ENCODE measurements at regions of chr15 and their contacts with region 1.

Region 1: DNA sequence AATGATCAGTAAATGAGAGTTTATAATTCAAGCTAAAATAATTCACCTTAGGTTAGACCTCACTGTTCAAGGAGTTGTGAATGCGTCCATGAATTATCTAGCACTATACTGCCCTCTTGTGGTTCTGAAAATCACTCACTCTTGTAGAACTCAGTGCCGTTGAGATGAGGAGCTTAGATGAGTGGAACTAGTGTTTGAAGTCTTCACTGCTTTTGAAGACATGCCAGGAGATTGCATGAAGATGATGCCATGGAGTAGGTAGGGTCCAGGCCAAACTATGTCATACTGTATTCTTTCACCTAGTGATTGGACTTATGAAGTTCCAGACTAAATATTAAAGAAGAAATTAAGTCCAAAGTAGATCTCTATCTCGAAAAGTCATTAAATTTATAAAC is 28.8 kb downstream of the LYSMD4 start:
- DNase-seq: peak; percentile 61 to 72 (median 70)
- H3K4me3 ChIP-seq: no peak overlapping the region
- H3K4me3 Mint-ChIP-seq: no peak overlapping the region
- H3K27ac ChIP-seq: no peak overlapping the region
- H3K27ac Mint-ChIP-seq: peak overlapping the region in 2 of 7 donors; percentile 8 to 71
- H3K4me1 ChIP-seq: peaks cover 18% of the 10 kb centered on the region
- H3K4me1 Mint-ChIP-seq: peaks cover 23 to 37% (median 31%) of the 10 kb centered on the region in 4 donors
- H3K27me3 ChIP-seq: no peaks in the 10 kb centered on the region
- H3K27me3 Mint-ChIP-seq: no peaks in the 10 kb centered on the region

Region 2: DNA sequence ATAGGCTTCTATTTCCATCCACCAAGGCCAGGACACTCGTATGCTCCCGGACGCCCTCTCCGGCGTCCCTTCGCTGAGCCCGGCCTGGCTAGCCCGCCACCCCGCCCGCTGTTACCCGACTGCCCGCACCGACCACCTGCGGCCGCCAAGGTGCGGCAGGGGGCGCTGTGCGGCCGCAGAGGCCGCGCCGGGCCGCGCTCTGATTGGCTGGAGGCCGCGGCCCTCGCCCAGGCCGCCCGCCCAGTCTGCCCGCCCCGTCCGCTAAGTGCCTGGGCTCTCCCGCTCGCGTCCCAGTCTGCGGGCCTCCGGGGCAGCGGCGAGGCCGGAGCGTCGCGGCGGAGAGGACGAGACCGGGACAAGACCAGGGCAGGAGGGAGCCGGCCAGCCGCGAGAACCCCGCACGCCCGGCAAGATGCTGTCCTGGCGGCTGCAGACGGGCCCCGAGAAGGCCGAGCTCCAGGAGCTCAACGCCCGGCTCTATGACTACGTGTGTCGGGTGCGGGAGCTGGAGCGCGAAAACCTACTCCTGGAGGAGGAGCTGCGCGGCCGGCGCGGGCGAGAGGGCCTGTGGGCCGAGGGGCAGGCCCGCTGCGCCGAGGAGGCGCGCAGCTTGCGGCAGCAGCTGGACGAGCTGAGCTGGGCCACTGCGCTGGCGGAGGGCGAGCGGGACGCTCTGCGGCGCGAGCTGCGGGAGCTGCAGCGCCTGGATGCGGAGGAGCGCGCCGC is 599.5 kb before region 1 on chr15 and contains the start of gene SYNM:
- CTCF ChIA-PET with region 1: interaction called, 7 read pairs
- POLR2A ChIA-PET with region 1: no interaction called
- intact Hi-C with region 1: loop called (anchors 1 kb)
- DNase-seq: peak in 3 of 5 donors; percentile 13 to 20 (median 16)
- H3K4me3 ChIP-seq: peak within 1 kb of the TSS in 1 of 2 donors; percentile 9
- H3K4me3 Mint-ChIP-seq: peak within 1 kb of the TSS; percentile 54 to 81 (median 60)
- H3K27ac ChIP-seq: no peak within 1 kb of the TSS
- H3K27ac Mint-ChIP-seq: peak within 1 kb of the TSS in 2 of 7 donors; percentile 21 to 65
- H3K4me1 ChIP-seq: peaks cover 10% of the 10 kb centered on the region
- H3K4me1 Mint-ChIP-seq: peaks cover 8 to 37% (median 19%) of the 10 kb centered on the region in 4 donors
- H3K27me3 ChIP-seq: peaks cover 13% of the 10 kb centered on the region
- H3K27me3 Mint-ChIP-seq: peaks cover 20 to 32% of the 10 kb centered on the region in 2 donors
- total RNA-seq, gene SYNM: 13.7 to 14.2 TPM

Region 3: DNA sequence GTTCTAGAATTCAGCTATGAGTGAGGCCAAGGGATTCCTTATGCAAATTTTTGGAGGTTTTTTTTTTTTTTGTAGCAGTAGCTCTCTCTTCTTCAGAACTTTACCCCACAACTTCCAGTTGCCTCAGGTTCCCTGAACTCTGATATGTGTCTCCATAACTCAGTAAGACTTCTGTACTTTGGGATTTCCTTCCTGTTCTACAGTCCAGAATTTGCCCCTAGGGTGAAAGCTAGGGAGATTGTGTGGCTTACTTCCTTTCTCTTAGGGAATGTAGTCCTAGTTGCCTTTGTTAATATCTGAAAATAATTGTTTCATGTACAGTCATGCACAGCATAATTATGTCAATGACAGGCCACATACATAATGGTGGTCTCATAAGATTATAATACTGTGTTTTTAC is 422.3 kb before region 1 on chr15:
- CTCF ChIA-PET with region 1: interaction called, 153 read pairs
- POLR2A ChIA-PET with region 1: no interaction called
- intact Hi-C with region 1: loop called (anchors 1 kb)
- DNase-seq: no peak
- H3K4me3 ChIP-seq: no peak overlapping the region
- H3K4me3 Mint-ChIP-seq: no peak overlapping the region
- H3K27ac ChIP-seq: no peak overlapping the region
- H3K27ac Mint-ChIP-seq: no peak overlapping the region
- H3K4me1 ChIP-seq: no peaks in the 10 kb centered on the region
- H3K4me1 Mint-ChIP-seq: peaks cover 7 to 25% (median 15%) of the 10 kb centered on the region in 4 donors
- H3K27me3 ChIP-seq: no peaks in the 10 kb centered on the region
- H3K27me3 Mint-ChIP-seq: no peaks in the 10 kb centered on the region

Region 4: DNA sequence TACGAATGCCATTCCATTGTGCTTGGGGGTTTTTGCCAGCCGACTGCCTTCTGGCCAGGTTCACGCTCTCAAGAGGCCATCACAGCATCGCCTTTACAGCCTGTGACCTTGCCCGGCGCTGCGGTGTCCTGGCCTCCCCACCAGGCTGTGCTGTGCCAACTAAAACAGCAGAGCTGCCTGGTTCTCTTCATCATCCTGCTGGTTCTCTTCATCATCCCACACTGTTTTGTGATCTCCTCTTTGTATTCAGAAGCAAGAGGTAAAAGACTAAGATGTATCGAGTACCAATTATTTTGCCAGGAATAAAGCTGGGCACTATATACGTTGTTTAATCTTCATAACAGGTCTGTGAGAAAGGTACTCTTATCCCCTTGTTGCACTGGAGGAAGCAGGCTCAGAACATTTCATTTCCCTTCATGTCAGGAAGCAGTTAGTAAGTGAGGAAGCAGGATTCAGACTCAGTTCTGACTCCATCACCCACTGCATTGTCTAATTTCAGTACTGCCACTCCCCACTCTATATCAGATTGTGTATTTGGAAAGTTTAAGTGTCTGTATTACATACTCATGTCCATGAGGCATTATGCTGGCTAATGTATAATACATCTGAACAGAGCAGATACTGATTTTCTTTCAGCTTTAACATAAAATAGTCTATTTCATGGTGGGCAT is 360.4 kb before region 1 on chr15:
- CTCF ChIA-PET with region 1: interaction called, 72 read pairs
- POLR2A ChIA-PET with region 1: interaction called, 4 read pairs
- intact Hi-C with region 1: loop called (anchors 1 kb)
- DNase-seq: peak in 4 of 5 donors; percentile 17 to 33 (median 20)
- H3K4me3 ChIP-seq: no peak overlapping the region
- H3K4me3 Mint-ChIP-seq: no peak overlapping the region
- H3K27ac ChIP-seq: no peak overlapping the region
- H3K27ac Mint-ChIP-seq: peak overlapping the region in 1 of 7 donors; percentile 4
- H3K4me1 ChIP-seq: no peaks in the 10 kb centered on the region
- H3K4me1 Mint-ChIP-seq: peaks cover 0 to 4% (median 1%) of the 10 kb centered on the region in 4 donors
- H3K27me3 ChIP-seq: no peaks in the 10 kb centered on the region
- H3K27me3 Mint-ChIP-seq: no peaks in the 10 kb centered on the region

Region 5: GRCh38 chr15:99565299-99566156 is 138.9 kb before region 1 on chr15 and contains the start of gene MEF2A:
- CTCF ChIA-PET with region 1: interaction called, 18 read pairs
- POLR2A ChIA-PET with region 1: interaction called, 3 read pairs
- intact Hi-C with region 1: loop called (anchors 5 kb)
- DNase-seq: peak; percentile 92 to 94 (median 92)
- H3K4me3 ChIP-seq: peak within 1 kb of the TSS; percentile 63 to 99
- H3K4me3 Mint-ChIP-seq: peak within 1 kb of the TSS; percentile 95 to 100 (median 98)
- H3K27ac ChIP-seq: peak within 1 kb of the TSS; percentile 85
- H3K27ac Mint-ChIP-seq: peak within 1 kb of the TSS; percentile 95 to 99 (median 97)
- H3K4me1 ChIP-seq: peaks cover 29% of the 10 kb centered on the region
- H3K4me1 Mint-ChIP-seq: peaks cover 28 to 45% (median 36%) of the 10 kb centered on the region in 4 donors
- H3K27me3 ChIP-seq: no peaks in the 10 kb centered on the region
- H3K27me3 Mint-ChIP-seq: peaks cover 0 to 3% of the 10 kb centered on the region in 2 donors
- total RNA-seq, gene MEF2A: 27.6 to 27.8 TPM

Region 6: DNA sequence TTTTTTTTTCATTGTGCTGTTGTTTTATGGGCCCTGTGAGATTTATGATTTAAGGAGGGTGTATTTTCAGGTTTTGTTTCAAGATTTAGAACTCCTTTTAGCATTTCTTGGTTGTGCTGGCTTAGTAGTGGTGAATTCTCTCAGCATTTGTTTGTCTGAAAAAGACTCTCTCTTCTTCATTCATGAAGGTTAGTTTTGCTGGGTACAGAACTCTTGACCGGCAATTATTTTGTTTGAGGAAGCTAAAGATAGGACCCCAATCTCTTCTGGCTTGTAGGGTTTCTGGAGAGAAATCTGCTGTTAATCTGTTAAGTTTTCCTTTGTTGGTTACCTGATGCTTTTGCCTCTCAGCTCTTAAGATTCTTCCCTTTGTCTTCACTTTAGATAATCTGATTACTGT is 18.2 kb before region 1 on chr15:
- CTCF ChIA-PET with region 1: interaction called, 18 read pairs
- POLR2A ChIA-PET with region 1: no interaction called
- intact Hi-C with region 1: no loop called
- DNase-seq: no peak
- H3K4me3 ChIP-seq: no peak overlapping the region
- H3K4me3 Mint-ChIP-seq: no peak overlapping the region
- H3K27ac ChIP-seq: no peak overlapping the region
- H3K27ac Mint-ChIP-seq: no peak overlapping the region
- H3K4me1 ChIP-seq: peaks cover 13% of the 10 kb centered on the region
- H3K4me1 Mint-ChIP-seq: peaks cover 15 to 28% (median 22%) of the 10 kb centered on the region in 4 donors
- H3K27me3 ChIP-seq: no peaks in the 10 kb centered on the region
- H3K27me3 Mint-ChIP-seq: no peaks in the 10 kb centered on the region

Region 7: GRCh38 chr15:99733268-99734039 is 29.0 kb after region 1 on chr15 and contains the start of gene LYSMD4:
- CTCF ChIA-PET with region 1: interaction called, 18 read pairs
- POLR2A ChIA-PET with region 1: interaction called, 7 read pairs
- intact Hi-C with region 1: loop called (anchors 1 kb)
- DNase-seq: peak; percentile 95 to 97 (median 96)
- H3K4me3 ChIP-seq: peak within 1 kb of the TSS; percentile 6 to 67
- H3K4me3 Mint-ChIP-seq: peak within 1 kb of the TSS; percentile 83 to 95 (median 87)
- H3K27ac ChIP-seq: peak within 1 kb of the TSS; percentile 46
- H3K27ac Mint-ChIP-seq: peak within 1 kb of the TSS; percentile 80 to 97 (median 88)
- H3K4me1 ChIP-seq: peaks cover 14% of the 10 kb centered on the region
- H3K4me1 Mint-ChIP-seq: peaks cover 12 to 24% (median 16%) of the 10 kb centered on the region in 4 donors
- H3K27me3 ChIP-seq: no peaks in the 10 kb centered on the region
- H3K27me3 Mint-ChIP-seq: no peaks in the 10 kb centered on the region
- total RNA-seq, gene LYSMD4: 18.0 to 19.0 TPM